ENCODE measurements at regions of chr1 and their contacts with region 1.

Region 1: GRCh38 chr1:204446370-204447111 is 34.9 kb upstream of the PPP1R15B start:
- DNase-seq: peak; percentile 90
- ATAC-seq: peak; percentile 88
- H3K4me3 ChIP-seq: no peak overlapping the region
- H3K4me3 Mint-ChIP-seq: peak overlapping the region; percentile 52
- H3K27ac ChIP-seq: peak overlapping the region; percentile 27 to 64
- H3K27ac Mint-ChIP-seq: peak overlapping the region; percentile 81
- H3K4me1 ChIP-seq: peaks cover 57 to 59% of the 10 kb centered on the region in 2 donors
- H3K4me1 Mint-ChIP-seq: peaks cover 58% of the 10 kb centered on the region
- H3K27me3 ChIP-seq: no peaks in the 10 kb centered on the region
- H3K27me3 Mint-ChIP-seq: no peaks in the 10 kb centered on the region
- CTCF ChIP-seq: peak; percentile 89

Region 2: DNA sequence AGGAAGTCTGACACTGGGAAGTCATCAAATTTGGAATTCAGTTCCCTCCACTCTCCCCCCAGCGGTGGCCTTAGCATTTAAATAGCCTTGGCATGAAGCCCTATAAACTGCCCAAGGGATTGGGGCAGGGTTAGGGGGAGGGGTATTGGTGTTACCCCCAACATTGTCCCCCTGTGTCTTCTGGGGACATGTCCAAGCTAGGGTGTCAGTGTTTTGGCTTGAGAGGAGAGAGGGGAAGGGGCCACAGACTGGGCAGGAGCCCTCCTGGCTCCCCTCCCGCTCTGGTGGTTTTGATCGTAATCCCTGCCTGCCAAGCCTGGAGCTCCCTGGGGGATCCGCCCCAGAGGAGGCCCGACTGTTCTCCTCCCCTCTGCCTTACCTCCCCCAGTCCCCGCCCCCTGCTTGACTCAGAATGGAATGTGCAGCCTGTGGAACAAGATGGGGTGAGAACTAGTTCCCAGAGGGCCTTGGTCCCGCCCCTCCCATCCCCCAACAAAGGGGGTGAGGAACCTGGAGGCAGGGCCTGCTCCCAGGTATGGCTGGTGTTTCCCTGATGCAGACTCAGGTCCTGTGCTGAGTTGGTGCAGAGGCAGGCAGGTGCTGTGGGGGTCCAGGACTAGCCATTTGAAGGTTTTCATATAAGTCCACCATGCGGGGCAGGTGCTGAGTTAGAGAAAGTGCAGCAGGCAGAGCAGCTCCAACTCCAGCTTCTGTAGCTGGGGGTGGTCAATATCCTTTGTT is 366.2 kb before region 1 on chr1:
- CTCF ChIA-PET with region 1: no interaction called
- POLR2A ChIA-PET with region 1: no interaction called
- intact Hi-C with region 1: no loop called
- DNase-seq: no peak
- ATAC-seq: no peak
- H3K4me3 ChIP-seq: no peak overlapping the region
- H3K4me3 Mint-ChIP-seq: no peak overlapping the region
- H3K27ac ChIP-seq: no peak overlapping the region
- H3K27ac Mint-ChIP-seq: no peak overlapping the region
- H3K4me1 ChIP-seq: peaks cover under 1 to 3% of the 10 kb centered on the region in 2 donors
- H3K4me1 Mint-ChIP-seq: peaks cover 1% of the 10 kb centered on the region
- H3K27me3 ChIP-seq: peaks cover 0 to 20% (median 9%) of the 10 kb centered on the region in 4 experiments
- H3K27me3 Mint-ChIP-seq: peaks cover 44% of the 10 kb centered on the region
- CTCF ChIP-seq: no peak

Region 3: GRCh38 chr1:204417231-204417997 is 29.1 kb before region 1 on chr1:
- CTCF ChIA-PET with region 1: interaction called, 18 read pairs
- POLR2A ChIA-PET with region 1: no interaction called
- intact Hi-C with region 1: loop called (anchors 5 kb)
- DNase-seq: no peak
- ATAC-seq: no peak
- H3K4me3 ChIP-seq: no peak overlapping the region
- H3K4me3 Mint-ChIP-seq: peak overlapping the region; percentile 60
- H3K27ac ChIP-seq: peak overlapping the region in 1 of 2 donors; percentile 37
- H3K27ac Mint-ChIP-seq: peak overlapping the region; percentile 83
- H3K4me1 ChIP-seq: peaks cover 25 to 29% of the 10 kb centered on the region in 2 donors
- H3K4me1 Mint-ChIP-seq: peaks cover 44% of the 10 kb centered on the region
- H3K27me3 ChIP-seq: no peaks in the 10 kb centered on the region
- H3K27me3 Mint-ChIP-seq: no peaks in the 10 kb centered on the region
- CTCF ChIP-seq: no peak

Region 4: GRCh38 chr1:204465546-204466415 is 19.2 kb after region 1 on chr1:
- CTCF ChIA-PET with region 1: interaction called, 67 read pairs
- POLR2A ChIA-PET with region 1: interaction called, 3 read pairs
- intact Hi-C with region 1: loop called (anchors 2 kb)
- DNase-seq: peak; percentile 57
- ATAC-seq: peak; percentile 49
- H3K4me3 ChIP-seq: peak overlapping the region in 1 of 5 experiments; percentile 2
- H3K4me3 Mint-ChIP-seq: peak overlapping the region; percentile 80
- H3K27ac ChIP-seq: peak overlapping the region; percentile 57 to 72
- H3K27ac Mint-ChIP-seq: peak overlapping the region; percentile 95
- H3K4me1 ChIP-seq: peaks cover 77 to 80% of the 10 kb centered on the region in 2 donors
- H3K4me1 Mint-ChIP-seq: peaks cover 84% of the 10 kb centered on the region
- H3K27me3 ChIP-seq: no peaks in the 10 kb centered on the region
- H3K27me3 Mint-ChIP-seq: no peaks in the 10 kb centered on the region
- CTCF ChIP-seq: no peak

Region 5: GRCh38 chr1:204494281-204495077 is 47.9 kb after region 1 on chr1 and contains the start of gene PIK3C2B:
- CTCF ChIA-PET with region 1: interaction called, 1,884 read pairs
- POLR2A ChIA-PET with region 1: interaction called, 161 read pairs
- intact Hi-C with region 1: no loop called
- DNase-seq: peak; percentile 87
- ATAC-seq: peak; percentile 81
- H3K4me3 ChIP-seq: peak within 1 kb of the TSS; percentile 84 to 98 (median 92)
- H3K4me3 Mint-ChIP-seq: peak within 1 kb of the TSS; percentile 97
- H3K27ac ChIP-seq: peak within 1 kb of the TSS; percentile 78 to 79
- H3K27ac Mint-ChIP-seq: peak within 1 kb of the TSS; percentile 96
- H3K4me1 ChIP-seq: peaks cover 73 to 88% of the 10 kb centered on the region in 2 donors
- H3K4me1 Mint-ChIP-seq: peaks cover 80% of the 10 kb centered on the region
- H3K27me3 ChIP-seq: no peaks in the 10 kb centered on the region
- H3K27me3 Mint-ChIP-seq: no peaks in the 10 kb centered on the region
- CTCF ChIP-seq: peak; percentile 61
- total RNA-seq, gene PIK3C2B: 90.3 and 93.7 TPM in 2 replicates

Region 6: GRCh38 chr1:204544321-204544720 is 97.8 kb after region 1 on chr1:
- CTCF ChIA-PET with region 1: interaction called, 11 read pairs
- POLR2A ChIA-PET with region 1: no interaction called
- intact Hi-C with region 1: no loop called
- DNase-seq: no peak
- ATAC-seq: no peak
- H3K4me3 ChIP-seq: no peak overlapping the region
- H3K4me3 Mint-ChIP-seq: no peak overlapping the region
- H3K27ac ChIP-seq: peak overlapping the region in 1 of 2 donors; percentile 72
- H3K27ac Mint-ChIP-seq: peak overlapping the region; percentile 32
- H3K4me1 ChIP-seq: peaks cover 4 to 6% of the 10 kb centered on the region in 2 donors
- H3K4me1 Mint-ChIP-seq: peaks cover 24% of the 10 kb centered on the region
- H3K27me3 ChIP-seq: no peaks in the 10 kb centered on the region
- H3K27me3 Mint-ChIP-seq: no peaks in the 10 kb centered on the region
- CTCF ChIP-seq: no peak

Measured in B cell (primary cell).